Gastrocnemius medialis (tissue), 4 donors: ENCODE measurements at regions of chr5 and their contacts with region 1.

Region 1: DNA sequence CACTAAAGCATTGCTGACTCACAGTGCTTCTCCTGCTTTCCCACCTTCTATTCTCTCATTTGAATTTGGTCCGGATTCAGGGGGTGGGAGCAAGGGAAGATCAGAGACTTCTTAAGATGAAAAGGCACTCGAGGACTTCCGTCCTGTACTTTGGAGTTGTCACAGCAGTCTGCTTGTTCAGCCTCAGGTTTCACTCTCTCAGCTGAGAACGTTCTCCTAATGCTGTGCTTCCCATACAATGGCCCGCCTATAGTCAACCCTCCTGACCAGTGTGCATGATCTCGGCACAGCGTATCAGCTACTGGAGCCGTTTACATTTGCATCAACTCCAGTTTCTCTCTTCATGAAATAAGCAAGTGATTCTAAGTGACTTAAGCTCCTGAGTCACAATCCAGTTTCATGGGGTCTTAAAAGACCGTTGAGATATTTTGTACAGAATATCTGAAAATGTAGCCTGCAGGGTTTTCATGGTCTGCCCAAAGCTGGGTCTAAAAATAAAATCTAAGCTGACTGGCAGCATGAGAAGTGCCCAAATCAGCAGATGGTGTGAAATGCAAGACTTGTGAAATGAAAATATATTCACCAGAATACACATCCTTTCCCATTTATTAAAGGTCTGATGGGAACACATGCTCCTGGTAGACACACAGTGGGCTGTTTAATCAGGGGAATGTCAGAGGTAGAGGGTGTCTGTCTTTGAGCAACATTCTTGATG is 145.0 kb downstream of the ADCY2 start:
- DNase-seq: no peak
- ATAC-seq: no peak
- H3K4me3 ChIP-seq: no peak overlapping the region
- H3K27ac ChIP-seq: no peak overlapping the region
- H3K4me1 ChIP-seq: peaks cover 4 to 12% of the 10 kb centered on the region in 2 donors
- H3K27me3 ChIP-seq: no peaks in the 10 kb centered on the region
- CTCF ChIP-seq: no peak
- POLR2A ChIP-seq: no peak

Region 2: DNA sequence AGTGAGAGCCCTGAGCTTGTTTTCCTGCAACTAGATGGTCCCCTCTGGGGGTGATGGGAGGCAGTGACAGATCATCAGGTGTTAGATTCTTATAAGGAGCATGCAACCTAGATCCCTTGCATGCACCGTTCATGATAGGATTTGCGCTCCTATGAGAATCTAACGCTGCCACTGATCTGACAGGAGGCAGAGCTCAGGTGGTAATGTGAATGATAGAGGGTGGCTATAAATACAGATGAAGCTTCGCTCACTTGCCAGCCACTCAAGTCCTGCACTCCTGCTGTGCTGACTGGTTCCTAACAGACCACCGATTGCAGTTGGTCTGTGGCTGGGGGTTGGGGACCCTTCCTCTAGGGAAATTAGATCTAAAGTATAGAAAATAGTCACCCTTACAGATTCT is 435.6 kb before region 1 on chr5:
- in situ Hi-C with region 1: no loop called
- intact Hi-C with region 1: no loop called
- DNase-seq: no peak
- ATAC-seq: no peak
- H3K4me3 ChIP-seq: no peak overlapping the region
- H3K27ac ChIP-seq: no peak overlapping the region
- H3K4me1 ChIP-seq: no peaks in the 10 kb centered on the region
- H3K27me3 ChIP-seq: no peaks in the 10 kb centered on the region
- CTCF ChIP-seq: no peak
- POLR2A ChIP-seq: no peak

Region 3: DNA sequence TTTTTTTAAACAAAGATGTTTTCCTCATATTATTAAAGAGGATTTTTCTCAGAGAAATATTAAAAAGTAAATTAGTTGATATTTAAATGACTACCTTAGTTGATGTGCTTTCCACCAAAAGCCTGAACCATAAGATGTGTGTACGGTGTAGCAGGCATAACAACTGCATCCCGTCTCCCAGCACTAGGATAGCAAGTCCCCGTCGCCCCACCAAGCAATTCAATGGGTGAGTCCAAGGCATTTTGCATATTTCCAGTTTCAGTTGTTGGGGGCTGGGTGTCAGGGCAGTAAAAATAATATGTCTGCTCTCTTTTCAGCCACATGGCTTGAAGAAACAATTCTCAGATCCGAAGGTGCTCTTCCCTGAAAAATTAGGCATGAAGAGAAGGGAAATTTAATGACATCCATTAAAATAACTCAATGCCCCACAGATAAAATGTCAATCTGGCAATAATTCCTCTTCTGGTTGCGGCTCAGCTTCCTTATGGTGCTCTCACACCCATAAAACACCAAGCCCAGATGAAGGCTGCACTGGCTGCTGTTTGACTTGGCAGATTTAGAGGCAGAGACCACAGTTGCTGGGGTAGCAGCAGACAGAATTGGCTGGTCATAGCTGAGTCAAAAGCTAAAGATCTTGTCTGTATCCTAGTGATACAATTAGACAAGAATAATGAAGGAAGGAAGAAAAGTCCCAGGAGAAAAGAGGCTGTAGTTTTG is 269.4 kb before region 1 on chr5:
- in situ Hi-C with region 1: no loop called
- intact Hi-C with region 1: no loop called
- DNase-seq: no peak
- ATAC-seq: no peak
- H3K4me3 ChIP-seq: no peak overlapping the region
- H3K27ac ChIP-seq: no peak overlapping the region
- H3K4me1 ChIP-seq: no peaks in the 10 kb centered on the region
- H3K27me3 ChIP-seq: no peaks in the 10 kb centered on the region
- CTCF ChIP-seq: no peak
- POLR2A ChIP-seq: no peak

Region 4: DNA sequence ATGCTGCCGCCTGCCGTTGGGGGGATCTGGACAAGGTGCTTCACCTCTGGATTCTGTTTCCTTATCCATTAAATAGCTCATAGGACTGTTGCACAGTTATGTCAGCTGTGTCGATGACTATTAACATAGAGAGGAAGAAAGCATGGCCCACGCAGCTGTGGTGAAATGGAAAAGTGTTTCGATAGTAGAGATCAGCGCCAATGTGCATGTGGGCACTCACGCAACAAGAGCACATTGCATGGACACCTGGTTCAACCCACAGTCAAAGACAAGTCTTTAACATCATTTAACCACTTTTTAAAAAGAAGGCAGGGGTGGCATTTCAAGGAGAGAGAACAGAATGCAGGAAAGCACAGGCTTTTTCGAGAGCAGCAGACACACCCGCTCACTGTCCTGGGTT is 37.4 kb before region 1 on chr5:
- in situ Hi-C with region 1: no loop called
- intact Hi-C with region 1: loop called (anchors 1 kb)
- DNase-seq: no peak
- ATAC-seq: no peak
- H3K4me3 ChIP-seq: no peak overlapping the region
- H3K27ac ChIP-seq: no peak overlapping the region
- H3K4me1 ChIP-seq: peaks cover 0 to 12% of the 10 kb centered on the region in 2 donors
- H3K27me3 ChIP-seq: no peaks in the 10 kb centered on the region
- CTCF ChIP-seq: no peak
- POLR2A ChIP-seq: no peak